AG04450 (cell line): ENCODE measurements at regions of chr2 and their contacts with region 1.

Region 1: GRCh38 chr2:222561817-222562645 is 93.9 kb downstream of the FARSB start:
- DNase-seq: no peak
- H3K4me3 ChIP-seq: no peak overlapping the region
- H3K27ac ChIP-seq: no peak overlapping the region
- H3K27me3 ChIP-seq: no peaks in the 10 kb centered on the region
- CTCF ChIP-seq: peak; percentile 66

Region 2: DNA sequence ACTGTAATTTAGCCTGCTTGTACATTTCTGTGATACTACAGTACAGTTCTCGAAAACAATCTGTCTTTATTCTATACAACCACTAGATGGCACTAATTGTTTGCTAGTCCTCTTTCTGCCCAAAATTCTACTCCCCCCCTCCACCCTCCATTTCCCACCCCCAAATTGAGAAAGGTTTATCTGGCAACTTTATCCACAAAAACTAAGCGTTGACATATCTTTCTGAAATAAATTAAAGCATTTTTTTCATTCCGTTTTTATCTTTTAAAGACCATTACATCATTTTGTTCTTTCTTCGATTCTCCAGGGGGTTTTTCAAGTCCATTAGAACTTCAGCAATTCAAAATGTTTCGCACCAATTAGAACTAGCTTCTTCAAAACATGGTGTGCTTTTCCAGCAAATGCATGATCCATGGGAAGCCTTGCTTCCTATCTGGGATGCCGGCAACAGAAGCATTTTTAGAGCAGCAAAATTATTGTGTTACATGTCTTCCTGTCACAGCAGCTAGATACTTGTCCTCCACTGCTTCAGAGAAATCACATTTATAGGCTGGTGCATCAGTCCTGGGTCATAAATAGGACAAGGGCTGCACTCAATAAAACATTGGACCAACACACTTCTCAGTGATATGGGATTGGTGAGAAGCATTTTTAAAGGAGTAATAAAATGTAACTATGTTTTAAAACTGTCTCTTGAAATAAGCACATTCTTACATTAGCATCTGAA is 504.5 kb before region 1 on chr2:
- CTCF ChIA-PET with region 1: interaction called, 17 read pairs
- POLR2A ChIA-PET with region 1: no interaction called
- DNase-seq: no peak
- H3K4me3 ChIP-seq: no peak overlapping the region
- H3K27ac ChIP-seq: no peak overlapping the region
- H3K27me3 ChIP-seq: no peaks in the 10 kb centered on the region
- CTCF ChIP-seq: peak; percentile 67

Region 3: DNA sequence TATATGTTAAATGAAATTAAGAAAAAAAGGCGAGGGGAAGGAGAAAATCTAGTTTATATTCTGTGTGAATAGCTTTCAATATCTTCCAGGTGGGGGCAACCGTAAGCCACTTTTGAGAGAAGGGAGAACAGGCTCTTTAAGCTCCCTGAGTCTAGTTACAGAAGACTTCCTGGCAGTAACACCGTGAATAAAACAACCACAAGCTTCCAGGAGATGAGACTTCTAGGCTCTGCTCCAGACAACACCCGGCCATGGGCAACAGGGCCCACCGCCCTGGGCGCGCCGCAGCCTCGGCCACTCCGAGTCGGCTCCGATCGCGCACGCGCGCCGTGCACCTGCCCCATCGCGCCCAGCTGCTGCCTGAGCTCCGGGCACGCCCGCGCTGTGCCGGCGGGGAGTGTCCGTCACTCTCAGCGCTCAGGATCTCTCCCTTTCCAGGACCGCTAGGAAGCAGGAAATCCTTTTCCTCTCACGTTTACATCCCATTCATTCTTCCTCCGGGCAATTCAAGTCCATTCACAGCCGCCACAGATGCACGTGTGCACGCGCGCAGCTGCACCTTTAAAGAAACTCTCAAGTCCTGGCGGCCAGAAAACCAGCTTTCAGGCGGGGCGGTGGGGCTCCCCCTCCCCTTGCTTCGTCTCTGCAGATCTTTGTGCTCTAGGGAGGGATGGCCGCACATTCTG is 243.9 kb before region 1 on chr2:
- CTCF ChIA-PET with region 1: interaction called, 22 read pairs
- POLR2A ChIA-PET with region 1: no interaction called
- DNase-seq: peak; percentile 4
- H3K4me3 ChIP-seq: peak overlapping the region; percentile 49
- H3K27ac ChIP-seq: no peak overlapping the region
- H3K27me3 ChIP-seq: peaks cover 33% of the 10 kb centered on the region
- CTCF ChIP-seq: peak; percentile 47

Region 4: DNA sequence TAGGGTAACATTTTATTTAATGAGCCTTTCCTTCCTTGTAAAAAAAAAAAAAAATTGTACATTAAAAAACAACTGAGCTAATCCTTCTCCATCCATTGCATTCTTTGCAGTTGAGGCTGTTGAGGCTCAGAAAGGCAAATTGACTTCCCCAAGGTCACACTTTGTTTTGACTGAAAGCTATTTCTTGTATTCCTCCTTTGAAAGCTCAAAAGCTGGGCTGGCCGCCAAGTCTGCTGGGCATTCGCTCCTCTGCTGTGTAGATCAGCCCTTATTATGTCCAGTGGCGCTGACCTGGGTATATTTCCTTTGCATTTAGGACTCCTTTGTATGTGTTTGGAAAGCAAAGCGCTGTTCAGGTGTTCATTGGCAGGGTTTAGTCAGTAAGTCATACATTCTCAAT is 93.7 kb before region 1 on chr2:
- CTCF ChIA-PET with region 1: no interaction called
- POLR2A ChIA-PET with region 1: no interaction called
- DNase-seq: no peak
- H3K4me3 ChIP-seq: no peak overlapping the region
- H3K27ac ChIP-seq: no peak overlapping the region
- H3K27me3 ChIP-seq: peaks cover 3% of the 10 kb centered on the region
- CTCF ChIP-seq: no peak

Region 5: GRCh38 chr2:222572751-222573174 is 10.7 kb after region 1 on chr2:
- CTCF ChIA-PET with region 1: interaction called, 12 read pairs
- POLR2A ChIA-PET with region 1: no interaction called
- DNase-seq: peak; percentile 15
- H3K4me3 ChIP-seq: no peak overlapping the region
- H3K27ac ChIP-seq: peak overlapping the region; percentile 73
- H3K27me3 ChIP-seq: no peaks in the 10 kb centered on the region
- CTCF ChIP-seq: no peak